Mammary epithelial cell (primary cell): ENCODE measurements at regions of chr10 and their contacts with region 1.

Region 1: GRCh38 chr10:104291439-104291951 is 22.5 kb downstream of the GSTO2 start:
- DNase-seq: peak; percentile 76
- H3K4me3 ChIP-seq: no peak overlapping the region
- H3K27ac ChIP-seq: no peak overlapping the region
- H3K4me1 ChIP-seq: no peaks in the 10 kb centered on the region
- H3K27me3 ChIP-seq: no peaks in the 10 kb centered on the region
- CTCF ChIP-seq: peak; percentile 99 to 100

Region 2: GRCh38 chr10:104067525-104067924 is 224.0 kb before region 1 on chr10:
- CTCF ChIA-PET with region 1: no interaction called
- dilution Hi-C with region 1: no loop called
- in situ Hi-C with region 1: no loop called
- intact Hi-C with region 1: no loop called
- DNase-seq: no peak
- H3K4me3 ChIP-seq: no peak overlapping the region
- H3K27ac ChIP-seq: no peak overlapping the region
- H3K4me1 ChIP-seq: no peaks in the 10 kb centered on the region
- H3K27me3 ChIP-seq: no peaks in the 10 kb centered on the region
- CTCF ChIP-seq: no peak

Region 3: GRCh38 chr10:104314591-104315485 is 23.3 kb after region 1 on chr10:
- CTCF ChIA-PET with region 1: no interaction called
- dilution Hi-C with region 1: no loop called
- in situ Hi-C with region 1: no loop called
- intact Hi-C with region 1: no loop called
- DNase-seq: no peak
- H3K4me3 ChIP-seq: no peak overlapping the region
- H3K27ac ChIP-seq: no peak overlapping the region
- H3K4me1 ChIP-seq: peaks cover 32% of the 10 kb centered on the region
- H3K27me3 ChIP-seq: no peaks in the 10 kb centered on the region
- CTCF ChIP-seq: no peak

Region 4: DNA sequence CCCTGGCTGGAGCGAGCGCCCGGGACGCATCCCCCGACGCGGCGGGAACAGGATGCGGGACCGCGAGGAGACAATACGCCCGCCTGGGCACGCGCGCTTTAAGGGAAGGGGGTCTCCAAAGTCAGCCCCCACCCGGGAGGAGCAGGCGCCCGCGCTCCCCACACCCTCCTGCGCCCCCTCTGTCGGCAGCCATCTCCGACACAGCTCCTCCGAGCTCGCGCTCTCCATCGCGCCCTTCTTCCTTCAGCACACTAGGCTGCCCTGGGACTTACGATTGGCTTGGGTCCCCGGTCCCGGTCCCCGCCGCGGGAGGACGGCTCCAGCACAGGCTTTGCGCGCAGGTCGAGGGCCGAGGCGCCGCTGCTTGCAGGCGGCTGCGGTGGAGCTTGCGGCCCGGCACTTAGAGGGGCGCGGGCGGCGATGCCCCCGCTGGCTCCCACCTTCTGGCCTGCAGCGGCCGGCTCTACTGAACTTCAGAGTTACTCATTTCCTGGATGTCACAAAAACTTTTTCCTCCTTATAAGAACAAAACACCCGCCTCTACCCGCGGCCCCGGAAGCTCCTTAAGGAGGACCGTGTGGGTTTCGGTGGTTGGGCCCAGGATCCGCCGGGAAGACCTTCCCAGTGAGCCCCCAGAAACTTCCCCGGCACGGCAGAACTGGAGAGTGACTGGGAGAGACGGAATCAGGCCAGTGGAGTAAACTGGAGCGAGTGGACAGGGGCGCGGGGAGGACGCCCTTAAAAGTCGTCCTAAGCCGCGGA is 46.7 kb after region 1 on chr10 and contains the start of gene ITPRIP:
- CTCF ChIA-PET with region 1: no interaction called
- dilution Hi-C with region 1: no loop called
- in situ Hi-C with region 1: no loop called
- intact Hi-C with region 1: loop called (anchors 1 kb)
- DNase-seq: peak; percentile 82
- H3K4me3 ChIP-seq: peak within 1 kb of the TSS; percentile 93 to 97 (median 95)
- H3K27ac ChIP-seq: peak within 1 kb of the TSS; percentile 97
- H3K4me1 ChIP-seq: peaks cover 33% of the 10 kb centered on the region
- H3K27me3 ChIP-seq: no peaks in the 10 kb centered on the region
- CTCF ChIP-seq: peak in 1 of 2 donors; percentile 22
- total RNA-seq, gene ITPRIP: 21.5 to 37.2 TPM

Region 5: GRCh38 chr10:104580774-104581675 is 289.5 kb after region 1 on chr10:
- CTCF ChIA-PET with region 1: no interaction called
- dilution Hi-C with region 1: no loop called
- in situ Hi-C with region 1: loop called in 1 of 2 experiments (anchors 25 kb)
- intact Hi-C with region 1: no loop called
- DNase-seq: peak; percentile 57
- H3K4me3 ChIP-seq: no peak overlapping the region
- H3K27ac ChIP-seq: no peak overlapping the region
- H3K4me1 ChIP-seq: peaks cover 20% of the 10 kb centered on the region
- H3K27me3 ChIP-seq: no peaks in the 10 kb centered on the region
- CTCF ChIP-seq: peak; percentile 85 to 89

Region 6: GRCh38 chr10:104622598-104623209 is 331.2 kb after region 1 on chr10:
- CTCF ChIA-PET with region 1: no interaction called
- dilution Hi-C with region 1: no loop called
- in situ Hi-C with region 1: no loop called
- intact Hi-C with region 1: loop called (anchors 1 kb)
- DNase-seq: peak; percentile 42
- H3K4me3 ChIP-seq: no peak overlapping the region
- H3K27ac ChIP-seq: no peak overlapping the region
- H3K4me1 ChIP-seq: no peaks in the 10 kb centered on the region
- H3K27me3 ChIP-seq: peaks cover 4% of the 10 kb centered on the region
- CTCF ChIP-seq: peak; percentile 86 to 94

Region 7: DNA sequence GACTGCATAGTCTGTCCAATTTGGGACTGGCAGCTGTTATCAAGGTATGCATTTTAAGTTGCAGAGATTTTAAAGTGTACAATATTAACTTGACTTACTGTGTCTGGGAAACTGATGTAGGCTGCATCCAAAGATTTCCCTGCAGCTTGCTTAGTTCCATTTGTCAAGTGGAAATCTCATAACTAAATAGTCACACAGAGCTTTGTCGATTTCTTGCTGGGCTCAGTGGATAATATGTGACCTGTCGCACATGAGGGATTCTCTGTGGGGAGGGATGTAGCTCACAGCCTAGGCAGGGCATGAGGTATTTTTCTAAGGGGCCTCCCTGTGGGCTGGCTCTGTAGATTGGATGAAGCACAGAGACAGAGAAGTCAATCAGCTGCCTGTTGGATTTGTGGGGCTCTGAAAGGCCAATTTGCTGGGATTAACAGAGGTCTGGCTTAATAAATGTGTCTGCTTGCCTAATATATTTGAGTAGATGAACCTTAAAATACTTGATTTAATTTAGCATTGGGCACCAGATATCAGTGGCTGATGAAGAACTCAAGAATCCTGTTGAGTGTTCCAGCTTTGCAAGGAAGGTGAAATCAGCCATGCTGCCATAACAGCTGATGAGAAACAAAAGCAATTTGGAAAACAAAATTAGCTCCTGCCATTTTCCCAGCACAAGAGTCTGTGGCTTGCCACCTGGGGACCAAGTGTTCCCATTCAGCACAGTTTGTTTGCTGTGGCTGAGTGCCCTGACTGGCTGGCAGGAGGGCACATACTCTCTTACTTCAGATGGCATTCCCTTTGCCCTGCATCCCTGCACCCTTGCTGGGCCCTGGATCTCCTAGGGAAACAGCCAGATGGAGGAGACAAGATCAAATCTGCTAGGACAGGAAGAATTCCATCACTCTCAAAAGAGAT is 948.1 kb after region 1 on chr10:
- CTCF ChIA-PET with region 1: no interaction called
- dilution Hi-C with region 1: no loop called
- in situ Hi-C with region 1: no loop called
- intact Hi-C with region 1: no loop called
- DNase-seq: no peak
- H3K4me3 ChIP-seq: no peak overlapping the region
- H3K27ac ChIP-seq: no peak overlapping the region
- H3K4me1 ChIP-seq: peaks cover 8% of the 10 kb centered on the region
- H3K27me3 ChIP-seq: no peaks in the 10 kb centered on the region
- CTCF ChIP-seq: no peak